ENCODE measurements at regions of chr20 and their contacts with region 1.

Region 1: GRCh38 chr20:48717095-48717672 is 110.6 kb downstream of the PREX1 start:
- DNase-seq: no peak
- H3K4me3 Mint-ChIP-seq: peak overlapping the region; percentile 19
- H3K27ac Mint-ChIP-seq: peak overlapping the region; percentile 95
- H3K4me1 Mint-ChIP-seq: peaks cover 91% of the 10 kb centered on the region
- H3K27me3 Mint-ChIP-seq: no peaks in the 10 kb centered on the region

Region 2: DNA sequence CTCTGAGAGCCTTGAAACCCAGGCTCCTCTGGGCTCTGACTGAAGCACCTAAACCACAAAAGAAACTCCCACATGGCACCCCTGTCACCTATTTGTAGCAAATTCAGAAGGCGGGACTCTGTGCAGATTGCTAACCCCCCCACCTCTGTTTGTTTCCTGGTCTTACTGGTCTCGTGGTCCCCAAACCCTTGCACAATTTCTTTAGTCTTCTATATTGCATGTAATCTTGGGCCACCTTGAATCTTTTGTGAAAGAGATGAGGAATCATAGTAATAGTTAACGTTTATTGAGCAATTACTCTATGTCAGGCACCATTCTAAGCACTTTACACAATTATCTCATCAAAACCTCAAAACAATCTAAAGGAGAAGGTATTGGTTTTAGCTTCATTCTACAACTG is 43.6 kb before region 1 on chr20:
- CTCF ChIA-PET with region 1: no interaction called
- POLR2A ChIA-PET with region 1: no interaction called
- DNase-seq: no peak
- H3K4me3 Mint-ChIP-seq: no peak overlapping the region
- H3K27ac Mint-ChIP-seq: no peak overlapping the region
- H3K4me1 Mint-ChIP-seq: peaks cover 1% of the 10 kb centered on the region
- H3K27me3 Mint-ChIP-seq: no peaks in the 10 kb centered on the region

Region 3: DNA sequence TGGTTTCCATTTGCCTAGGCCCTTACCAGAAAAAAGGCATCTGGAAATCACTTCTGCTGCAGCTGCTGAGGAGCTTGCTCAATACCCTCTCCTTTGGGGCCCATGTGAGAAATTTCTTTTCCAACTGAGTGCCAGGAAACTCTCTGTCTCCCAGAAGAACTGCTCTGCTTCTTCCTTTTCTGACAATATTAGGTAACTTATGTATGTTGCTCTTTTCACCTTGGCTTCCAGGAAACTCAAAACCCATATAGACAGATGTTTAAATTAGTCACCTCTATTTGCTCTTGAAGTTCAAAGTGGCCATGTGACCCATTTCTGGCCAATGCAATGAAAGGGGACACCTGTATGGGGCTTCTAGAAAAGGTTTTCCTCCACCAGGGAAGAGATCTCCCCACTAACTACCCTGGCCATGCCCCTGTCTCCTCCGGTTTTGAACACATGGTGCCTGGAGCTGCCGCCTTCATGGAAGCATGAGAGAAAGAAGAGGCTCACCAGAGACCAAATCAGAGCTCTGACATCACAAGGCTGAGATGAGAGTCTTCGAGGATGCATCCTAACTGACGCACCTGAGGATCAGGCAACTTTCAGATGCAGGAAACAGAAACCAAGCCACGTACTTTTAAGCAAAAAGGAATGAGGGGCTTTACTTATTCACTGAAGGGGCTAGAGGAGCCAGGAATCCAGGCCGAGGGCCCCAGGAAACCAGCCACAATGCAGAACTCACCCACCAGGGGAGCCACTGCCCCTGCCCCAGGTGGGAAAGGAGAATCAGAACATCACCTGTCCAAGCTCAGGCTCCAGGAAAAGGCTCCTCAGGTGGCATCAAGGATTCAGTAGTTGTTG is 10.8 kb before region 1 on chr20:
- CTCF ChIA-PET with region 1: interaction called, 3 read pairs
- POLR2A ChIA-PET with region 1: interaction called, 17 read pairs
- DNase-seq: no peak
- H3K4me3 Mint-ChIP-seq: no peak overlapping the region
- H3K27ac Mint-ChIP-seq: peak overlapping the region; percentile 70
- H3K4me1 Mint-ChIP-seq: peaks cover 50% of the 10 kb centered on the region
- H3K27me3 Mint-ChIP-seq: no peaks in the 10 kb centered on the region

Region 4: DNA sequence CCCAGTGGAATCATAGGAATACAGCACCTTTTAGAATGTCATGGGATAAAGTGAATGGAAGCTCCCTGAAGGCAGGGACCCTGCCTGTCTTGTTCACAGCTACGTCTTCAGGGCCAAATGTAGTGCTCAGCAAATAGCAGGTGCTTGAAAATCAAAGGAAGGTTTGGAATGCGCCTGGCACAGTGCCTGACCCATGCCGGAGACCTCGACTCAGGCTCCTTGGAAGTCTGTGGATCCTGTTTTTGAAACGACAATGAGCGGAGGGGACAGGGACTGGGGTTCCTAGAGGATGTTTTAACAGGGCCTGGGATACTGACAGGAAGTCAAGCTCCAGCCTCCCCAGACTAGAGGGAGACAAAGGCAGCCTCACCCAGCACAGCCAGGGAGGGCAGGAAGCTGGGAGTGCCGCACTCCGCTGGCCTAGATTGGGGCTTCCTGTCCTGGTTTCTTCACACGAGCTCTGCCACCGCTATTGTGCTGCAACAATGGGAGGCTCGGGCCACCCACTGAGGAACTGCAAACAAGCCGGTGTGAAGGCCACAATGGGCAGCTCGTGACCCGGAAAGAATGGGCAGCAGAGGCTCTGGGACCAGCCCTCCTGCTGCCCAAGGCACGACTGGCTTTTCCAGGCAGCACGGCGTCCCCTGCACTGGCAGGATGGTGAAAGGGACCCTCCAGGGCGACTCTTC is 33.9 kb after region 1 on chr20:
- CTCF ChIA-PET with region 1: no interaction called
- POLR2A ChIA-PET with region 1: interaction called, 12 read pairs
- DNase-seq: peak; percentile 71
- H3K4me3 Mint-ChIP-seq: peak overlapping the region; percentile 51
- H3K27ac Mint-ChIP-seq: peak overlapping the region; percentile 93
- H3K4me1 Mint-ChIP-seq: peaks cover 76% of the 10 kb centered on the region
- H3K27me3 Mint-ChIP-seq: no peaks in the 10 kb centered on the region

Measured in activated CD4-positive, alpha-beta memory T cell treated with anti-CD3 and anti-CD28 coated beads, Interleukin-2, amount 10 ng/mL, durations not matched to agents 7 days and 5 days (primary cell).